Mammary epithelial cell (primary cell): ENCODE measurements at regions of chr5 and their contacts with region 1.

Region 1: GRCh38 chr5:55232985-55233928 is at the start of gene CCNO:
- DNase-seq: peak; percentile 90
- H3K4me3 ChIP-seq: peak within 1 kb of the TSS; percentile 63 to 79 (median 74)
- H3K27ac ChIP-seq: peak within 1 kb of the TSS; percentile 44
- H3K4me1 ChIP-seq: peaks cover 14% of the 10 kb centered on the region
- H3K27me3 ChIP-seq: no peaks in the 10 kb centered on the region
- CTCF ChIP-seq: peak in 1 of 2 donors; percentile 31
- total RNA-seq, gene CCNO: 2.7 to 8.8 TPM

Region 2: GRCh38 chr5:54390015-54390414 is 843.2 kb before region 1 on chr5:
- CTCF ChIA-PET with region 1: no interaction called
- dilution Hi-C with region 1: no loop called
- in situ Hi-C with region 1: no loop called
- intact Hi-C with region 1: no loop called
- DNase-seq: peak; percentile 95
- H3K4me3 ChIP-seq: no peak overlapping the region
- H3K27ac ChIP-seq: peak overlapping the region; percentile 57
- H3K4me1 ChIP-seq: peaks cover 9% of the 10 kb centered on the region
- H3K27me3 ChIP-seq: no peaks in the 10 kb centered on the region
- CTCF ChIP-seq: no peak

Region 3: DNA sequence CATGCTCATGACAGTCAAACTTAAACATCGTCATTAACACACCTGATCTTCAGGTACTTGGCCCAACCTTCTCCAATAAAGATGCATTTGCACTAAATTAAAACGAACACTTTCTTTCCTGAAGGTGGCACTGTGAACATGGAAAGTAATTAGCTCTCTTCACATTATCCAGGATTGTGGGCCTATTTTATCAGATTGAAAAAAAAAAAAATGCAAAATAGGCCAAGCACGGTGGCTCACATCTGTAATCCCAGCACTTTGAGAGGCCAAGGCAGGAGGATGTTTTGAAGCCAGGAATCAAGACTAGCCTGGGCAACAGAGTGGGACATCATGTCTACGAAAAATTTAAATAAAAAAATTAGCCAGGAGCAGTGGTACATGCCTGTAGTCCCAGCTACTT is 45.9 kb before region 1 on chr5:
- CTCF ChIA-PET with region 1: no interaction called
- dilution Hi-C with region 1: no loop called
- in situ Hi-C with region 1: no loop called
- intact Hi-C with region 1: loop called (anchors 5 kb)
- DNase-seq: peak; percentile 42
- H3K4me3 ChIP-seq: no peak overlapping the region
- H3K27ac ChIP-seq: no peak overlapping the region
- H3K4me1 ChIP-seq: no peaks in the 10 kb centered on the region
- H3K27me3 ChIP-seq: peaks cover 4% of the 10 kb centered on the region
- CTCF ChIP-seq: peak; percentile 42 to 53

Region 4: GRCh38 chr5:55278778-55279177 is 45.5 kb after region 1 on chr5:
- CTCF ChIA-PET with region 1: no interaction called
- dilution Hi-C with region 1: no loop called
- in situ Hi-C with region 1: no loop called
- intact Hi-C with region 1: loop called (anchors 5 kb)
- DNase-seq: peak; percentile 22
- H3K4me3 ChIP-seq: no peak overlapping the region
- H3K27ac ChIP-seq: no peak overlapping the region
- H3K4me1 ChIP-seq: peaks cover 12% of the 10 kb centered on the region
- H3K27me3 ChIP-seq: no peaks in the 10 kb centered on the region
- CTCF ChIP-seq: no peak

Region 5: GRCh38 chr5:55307383-55308253 is 74.4 kb after region 1 on chr5 and contains the starts of genes DHX29 and MTREX:
- CTCF ChIA-PET with region 1: no interaction called
- dilution Hi-C with region 1: no loop called
- in situ Hi-C with region 1: no loop called
- intact Hi-C with region 1: loop called (anchors 2 kb)
- DNase-seq: peak; percentile 91
- H3K4me3 ChIP-seq: peak within 1 kb of the TSS; percentile 69 to 89 (median 77)
- H3K27ac ChIP-seq: peak within 1 kb of the TSS; percentile 89
- H3K4me1 ChIP-seq: peaks cover 24% of the 10 kb centered on the region
- H3K27me3 ChIP-seq: no peaks in the 10 kb centered on the region
- CTCF ChIP-seq: no peak
- total RNA-seq, gene DHX29: 21.3 to 26.3 TPM
- total RNA-seq, gene MTREX: 46.0 to 76.1 TPM

Region 6: DNA sequence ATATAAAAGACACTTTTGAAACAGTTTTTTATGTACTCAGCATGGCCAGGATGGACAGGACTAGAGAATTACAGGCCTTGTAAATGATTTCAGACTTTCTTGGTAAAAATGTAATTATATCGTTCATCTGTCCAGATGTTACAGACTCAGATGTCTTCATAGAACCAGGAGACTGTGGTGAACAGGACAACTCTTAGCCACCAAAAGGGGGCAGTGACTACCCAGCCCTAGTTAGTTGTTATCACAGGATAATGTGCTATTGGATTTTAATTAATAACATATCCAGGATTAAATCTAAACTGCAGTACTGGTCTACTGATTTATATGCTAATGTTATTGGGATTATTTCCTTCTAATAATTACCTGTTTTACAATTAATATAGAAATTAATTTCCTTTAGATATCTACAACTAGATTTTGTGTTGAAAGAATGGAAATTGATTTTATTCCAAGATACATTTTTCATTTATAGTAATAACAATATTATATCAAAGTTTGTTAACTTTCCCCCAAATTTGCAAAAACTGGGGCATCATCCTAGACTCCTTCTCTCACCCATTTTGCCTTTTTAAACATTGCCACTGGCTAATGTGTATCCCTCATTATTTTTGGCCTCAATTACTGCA is 173.9 kb after region 1 on chr5:
- CTCF ChIA-PET with region 1: no interaction called
- dilution Hi-C with region 1: no loop called
- in situ Hi-C with region 1: no loop called
- intact Hi-C with region 1: no loop called
- DNase-seq: peak; percentile 23
- H3K4me3 ChIP-seq: no peak overlapping the region
- H3K27ac ChIP-seq: no peak overlapping the region
- H3K4me1 ChIP-seq: no peaks in the 10 kb centered on the region
- H3K27me3 ChIP-seq: no peaks in the 10 kb centered on the region
- CTCF ChIP-seq: peak; percentile 68 to 76

Region 7: DNA sequence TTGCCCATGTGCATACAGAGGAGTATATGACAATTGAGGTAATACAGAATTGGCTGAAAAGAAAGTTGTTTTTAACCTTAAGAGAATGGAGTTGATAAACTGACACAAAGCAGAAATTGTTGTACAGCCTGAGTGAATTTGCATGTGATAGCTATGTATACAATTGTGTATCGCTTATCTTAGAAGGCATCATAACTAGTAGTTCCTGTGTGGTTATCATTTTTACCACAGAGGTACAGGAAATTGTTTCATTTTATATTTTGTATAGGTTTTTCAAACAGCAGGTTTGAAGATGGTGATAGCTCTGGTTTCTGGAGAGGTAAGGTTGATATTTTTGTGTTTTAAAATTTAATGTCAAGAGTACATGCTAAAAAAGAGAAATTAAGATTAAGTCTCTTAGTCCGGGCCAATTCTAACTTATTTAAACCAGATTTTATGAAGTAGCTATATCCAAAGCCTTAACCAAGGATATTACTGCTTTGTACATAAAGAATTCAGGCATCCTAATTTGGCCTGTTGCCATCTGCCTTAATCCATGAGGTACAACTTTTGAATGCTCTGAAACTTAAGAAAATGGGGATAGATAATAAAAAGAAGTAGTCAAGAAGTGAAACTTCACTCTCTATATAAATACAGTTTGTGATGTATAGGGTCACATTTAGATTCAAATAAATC is 530.6 kb after region 1 on chr5:
- CTCF ChIA-PET with region 1: no interaction called
- dilution Hi-C with region 1: no loop called
- in situ Hi-C with region 1: no loop called
- intact Hi-C with region 1: no loop called
- DNase-seq: no peak
- H3K4me3 ChIP-seq: no peak overlapping the region
- H3K27ac ChIP-seq: no peak overlapping the region
- H3K4me1 ChIP-seq: no peaks in the 10 kb centered on the region
- H3K27me3 ChIP-seq: peaks cover 2% of the 10 kb centered on the region
- CTCF ChIP-seq: no peak